Right ventricle myocardium inferior (tissue), 1 donor: ENCODE measurements at regions of chr5 and their contacts with region 1.

Region 1: GRCh38 chr5:36397901-36398536 is 96.3 kb upstream of the RANBP3L start:
- DNase-seq: no peak
- ATAC-seq: peak; percentile 62

Region 2: DNA sequence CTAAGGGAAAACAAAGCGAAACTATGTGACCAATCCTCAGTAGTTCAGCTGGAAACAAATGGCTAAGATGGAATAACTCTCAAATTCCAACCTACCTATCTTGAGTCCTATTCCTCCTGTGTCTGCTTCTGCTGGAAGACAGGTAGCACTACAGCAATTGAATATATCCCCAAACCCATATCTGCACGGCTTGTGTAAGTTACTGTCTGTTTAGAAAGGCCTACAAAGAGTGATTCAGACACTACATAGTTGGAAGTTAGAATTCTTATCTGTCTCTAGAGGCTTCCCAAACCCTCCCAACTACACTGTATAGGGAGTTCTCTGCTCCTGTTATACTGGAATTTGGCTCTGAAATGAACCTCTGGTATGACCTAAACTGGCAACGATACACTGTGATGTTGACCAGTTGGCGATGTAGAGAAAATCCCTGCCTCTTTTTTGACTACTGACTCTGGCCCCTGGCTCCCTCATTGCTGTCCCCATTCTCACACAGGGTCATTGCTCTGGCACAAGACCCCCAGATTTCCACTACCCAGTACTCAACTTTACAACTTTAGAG is 133.7 kb before region 1 on chr5:
- intact Hi-C with region 1: loop called (anchors 2 kb)
- DNase-seq: no peak
- ATAC-seq: no peak

Region 3: GRCh38 chr5:36301858-36302603 is 96.0 kb before region 1 on chr5 and contains the start of gene RANBP3L:
- intact Hi-C with region 1: no loop called
- DNase-seq: no peak
- ATAC-seq: peak; percentile 85
- total RNA-seq, gene RANBP3L: 0.49 TPM